OCI-LY7 (cell line): ENCODE measurements at regions of chr2 and their contacts with region 1.

Region 1: DNA sequence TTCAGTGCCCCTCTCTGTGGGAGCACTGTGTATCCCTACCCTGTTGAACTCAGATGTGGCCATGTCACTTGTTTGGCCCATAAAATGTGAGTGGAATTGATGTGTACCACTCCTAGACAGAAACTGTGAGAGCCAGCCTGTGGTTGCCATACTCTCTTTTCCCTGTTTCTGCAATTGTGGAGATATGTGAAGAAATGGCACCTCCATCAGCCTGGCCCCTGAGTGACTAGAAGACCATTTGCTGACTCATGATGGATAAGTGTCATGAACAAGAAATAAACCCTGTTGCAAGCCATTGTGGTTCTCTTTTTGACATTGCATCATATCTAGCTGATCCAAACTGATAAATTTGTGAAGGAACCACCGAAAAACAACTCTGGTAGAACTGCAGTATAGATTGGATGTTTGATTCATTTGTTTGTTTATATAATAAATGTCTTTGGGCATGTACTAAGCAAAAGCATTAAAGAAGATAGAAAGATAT is 214.5 kb upstream of the FBXO11 start:
- DNase-seq: no peak
- H3K4me3 ChIP-seq: no peak overlapping the region
- H3K27ac ChIP-seq: no peak overlapping the region
- H3K4me1 ChIP-seq: no peaks in the 10 kb centered on the region
- CTCF ChIP-seq: no peak

Region 2: DNA sequence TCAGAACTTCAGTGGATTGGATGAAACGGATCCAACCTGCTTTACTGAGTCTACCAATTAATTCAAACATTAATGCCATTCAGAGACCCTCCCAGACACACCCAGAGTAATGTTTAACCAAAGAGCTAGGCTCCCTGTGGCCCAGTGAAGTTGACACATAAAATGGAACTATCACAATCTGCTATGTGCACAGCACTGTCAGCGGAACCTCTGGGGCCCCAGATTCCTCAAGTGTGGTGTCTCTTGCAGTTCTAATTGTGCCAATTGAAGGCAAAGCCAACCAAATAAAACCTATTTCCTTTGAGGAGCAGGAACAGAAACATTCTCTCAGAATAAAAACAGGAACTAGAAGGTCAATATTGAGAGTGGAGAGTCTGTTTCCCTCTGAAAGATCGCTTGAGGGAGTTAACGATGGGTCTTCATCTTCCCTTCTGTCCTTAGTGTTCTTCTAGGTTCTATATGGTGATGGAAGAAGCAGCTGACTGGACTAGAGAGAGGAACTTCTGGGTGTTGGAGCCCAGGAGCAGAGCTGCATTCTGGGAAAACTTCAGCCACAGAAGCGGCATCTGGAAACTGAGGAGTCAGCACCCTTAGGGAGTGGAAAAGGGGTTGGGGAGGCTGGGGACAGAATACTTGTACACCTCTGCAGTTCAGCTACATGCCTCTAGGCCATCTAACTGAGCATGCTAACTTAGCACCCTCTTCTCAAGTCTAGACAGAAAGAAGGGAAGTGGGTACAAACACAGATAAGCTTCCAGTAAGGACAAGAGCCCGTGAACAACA is 40.1 kb before region 1 on chr2:
- CTCF ChIA-PET with region 1: no interaction called
- POLR2A ChIA-PET with region 1: no interaction called
- intact Hi-C with region 1: loop called (anchors 5 kb)
- DNase-seq: no peak
- H3K4me3 ChIP-seq: no peak overlapping the region
- H3K27ac ChIP-seq: no peak overlapping the region
- H3K4me1 ChIP-seq: no peaks in the 10 kb centered on the region
- CTCF ChIP-seq: no peak